AG04450 (cell line): ENCODE measurements at regions of chr7 and their contacts with region 1.

Region 1: DNA sequence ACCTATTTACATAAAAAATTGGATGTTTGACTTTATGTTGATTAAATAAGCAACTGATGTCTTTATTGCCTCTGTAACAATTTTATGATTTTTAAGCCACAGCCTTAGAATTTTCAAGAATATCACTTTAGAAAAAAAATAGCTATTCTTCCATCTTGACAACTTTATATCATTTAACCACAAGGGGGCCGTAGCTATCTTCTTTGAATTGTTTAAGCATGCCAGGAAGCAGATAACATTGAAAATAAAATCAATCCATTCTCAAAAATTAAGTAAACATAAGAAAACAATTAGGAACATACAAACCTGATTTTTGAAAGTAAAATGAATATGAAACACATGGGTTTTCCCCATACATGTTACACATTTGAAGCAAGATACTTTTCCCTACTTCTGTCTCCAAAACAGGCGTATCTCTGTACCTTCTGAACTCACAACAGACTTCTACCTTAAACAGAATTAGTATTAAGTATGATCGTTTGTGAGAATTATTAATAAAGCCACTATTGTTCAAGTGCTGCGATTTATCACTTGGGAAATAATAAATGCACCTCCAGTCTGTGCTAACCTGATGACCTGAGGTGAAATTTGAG is 209.0 kb downstream of the CACNA2D1 start:
- DNase-seq: peak; percentile 6
- H3K4me3 ChIP-seq: no peak overlapping the region
- H3K27ac ChIP-seq: no peak overlapping the region
- H3K27me3 ChIP-seq: no peaks in the 10 kb centered on the region
- CTCF ChIP-seq: peak; percentile 68

Region 2: GRCh38 chr7:82481499-82482097 is 247.0 kb after region 1 on chr7:
- CTCF ChIA-PET with region 1: interaction called, 15 read pairs
- POLR2A ChIA-PET with region 1: no interaction called
- DNase-seq: no peak
- H3K4me3 ChIP-seq: no peak overlapping the region
- H3K27ac ChIP-seq: no peak overlapping the region
- H3K27me3 ChIP-seq: no peaks in the 10 kb centered on the region
- CTCF ChIP-seq: peak; percentile 83

Region 3: GRCh38 chr7:82701949-82702348 is 467.4 kb after region 1 on chr7:
- CTCF ChIA-PET with region 1: interaction called, 10 read pairs
- POLR2A ChIA-PET with region 1: no interaction called
- DNase-seq: no peak
- H3K4me3 ChIP-seq: no peak overlapping the region
- H3K27ac ChIP-seq: no peak overlapping the region
- H3K27me3 ChIP-seq: no peaks in the 10 kb centered on the region
- CTCF ChIP-seq: no peak